Spleen (tissue), 13 donors: ENCODE measurements at regions of chr17 and their contacts with region 1.

Region 1: DNA sequence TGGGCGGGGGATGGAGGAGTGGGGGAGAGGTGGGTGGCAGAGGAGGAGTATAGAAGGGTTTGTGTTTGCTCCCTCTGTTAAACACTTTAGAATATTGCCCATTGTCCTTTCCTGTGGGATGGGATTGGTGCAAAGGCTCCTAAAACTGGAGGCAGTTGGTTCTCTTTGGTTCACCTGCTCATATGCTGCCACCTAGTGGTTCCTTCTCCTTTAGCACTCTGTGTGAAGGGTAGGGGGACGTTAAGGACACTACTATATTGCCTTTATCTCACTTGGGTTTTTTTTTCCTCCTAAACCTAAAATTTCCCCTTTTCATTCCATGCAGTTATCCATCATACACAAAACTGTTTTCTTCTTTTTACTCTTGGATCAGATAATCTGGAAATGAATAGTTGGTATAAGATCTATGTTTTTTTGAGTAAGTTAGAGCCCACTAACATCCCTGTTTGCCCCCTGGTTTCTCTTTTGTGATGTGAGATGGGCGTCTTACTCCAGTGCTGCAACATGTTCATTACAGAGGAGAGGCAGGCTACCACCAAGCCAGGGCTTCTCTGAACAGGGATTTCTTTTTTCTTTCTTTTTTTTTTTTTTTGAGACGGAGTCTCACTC is 23.8 kb downstream of the SNX11 start:
- DNase-seq: no peak
- H3K4me3 ChIP-seq: no peak overlapping the region
- H3K27ac ChIP-seq: no peak overlapping the region
- H3K4me1 ChIP-seq: peaks cover 0 to 7% (median 0%) of the 10 kb centered on the region in 6 donors
- H3K27me3 ChIP-seq: no peaks in the 10 kb centered on the region
- CTCF ChIP-seq: peak; percentile 57 to 91 (median 83)
- POLR2A ChIP-seq: no peak

Region 2: DNA sequence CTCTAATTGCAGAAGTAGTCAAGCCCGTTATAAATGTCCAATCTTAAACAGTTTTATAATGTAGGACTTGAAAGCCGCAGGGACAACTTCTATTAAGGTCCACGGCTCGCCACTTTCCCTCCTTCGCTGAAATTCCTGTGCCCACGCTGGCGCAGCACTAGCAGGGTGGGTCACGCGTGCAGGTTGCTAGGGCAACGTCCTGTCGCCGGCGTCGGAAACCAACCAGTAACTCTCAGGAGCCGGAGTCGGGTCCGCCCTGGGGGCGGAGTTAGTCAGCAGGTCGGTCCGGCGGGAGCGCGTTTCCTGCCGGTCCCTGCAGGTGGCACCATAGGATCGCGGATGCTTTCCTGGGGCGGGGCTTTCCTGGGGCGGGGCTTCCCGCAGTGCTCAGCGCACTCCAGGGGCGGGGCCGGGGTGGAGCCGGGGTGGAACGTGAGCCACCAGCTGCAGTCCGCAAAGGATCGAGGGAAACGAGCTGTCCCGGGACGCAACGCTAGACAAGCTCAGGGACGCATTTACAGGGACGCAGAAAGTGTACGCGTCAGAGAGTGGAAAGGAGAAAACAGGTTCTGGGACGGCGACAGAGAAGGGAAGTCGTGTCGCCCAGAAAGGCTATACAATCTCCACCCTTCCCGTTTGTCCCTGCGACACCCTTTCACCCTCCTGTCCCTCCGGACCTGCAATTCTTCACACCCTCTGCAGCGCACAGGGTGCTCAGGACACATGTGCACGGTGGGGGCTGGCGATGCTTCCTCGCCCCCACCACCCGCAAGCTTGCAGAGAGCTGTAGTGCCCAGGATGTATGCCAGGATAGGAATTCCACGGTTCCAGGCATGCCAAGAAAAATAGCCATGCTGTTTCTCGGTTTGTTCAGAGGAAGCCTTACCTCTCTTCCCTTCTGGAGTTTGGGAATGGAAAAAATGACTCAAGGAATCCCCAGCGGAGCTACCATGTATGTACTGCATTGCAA is 106.1 kb before region 1 on chr17:
- intact Hi-C with region 1: loop called (anchors 2 kb)
- DNase-seq: peak; percentile 100
- H3K4me3 ChIP-seq: peak overlapping the region; percentile 33 to 70 (median 50)
- H3K27ac ChIP-seq: peak overlapping the region in 5 of 8 donors; percentile 35 to 82 (median 71)
- H3K4me1 ChIP-seq: peaks cover 26 to 62% (median 44%) of the 10 kb centered on the region in 6 donors
- H3K27me3 ChIP-seq: peaks cover 0 to 45% (median 5%) of the 10 kb centered on the region in 7 donors
- CTCF ChIP-seq: peak; percentile 87 to 99 (median 95)
- POLR2A ChIP-seq: no peak

Region 3: GRCh38 chr17:48068491-48068961 is 62.8 kb before region 1 on chr17:
- intact Hi-C with region 1: no loop called
- DNase-seq: peak; percentile 30
- H3K4me3 ChIP-seq: no peak overlapping the region
- H3K27ac ChIP-seq: peak overlapping the region in 2 of 8 donors; percentile 9 to 76
- H3K4me1 ChIP-seq: peaks cover 0 to 29% (median 14%) of the 10 kb centered on the region in 6 donors
- H3K27me3 ChIP-seq: no peaks in the 10 kb centered on the region
- CTCF ChIP-seq: peak in 4 of 11 experiments; percentile 5 to 29 (median 14)
- POLR2A ChIP-seq: no peak

Region 4: GRCh38 chr17:48084932-48085444 is 46.3 kb before region 1 on chr17:
- intact Hi-C with region 1: loop called (anchors 5 kb)
- DNase-seq: no peak
- H3K4me3 ChIP-seq: no peak overlapping the region
- H3K27ac ChIP-seq: no peak overlapping the region
- H3K4me1 ChIP-seq: peaks cover 0 to 21% (median 11%) of the 10 kb centered on the region in 6 donors
- H3K27me3 ChIP-seq: no peaks in the 10 kb centered on the region
- CTCF ChIP-seq: no peak
- POLR2A ChIP-seq: no peak